ENCODE measurements at regions of chr6 and their contacts with region 1.

Region 1: DNA sequence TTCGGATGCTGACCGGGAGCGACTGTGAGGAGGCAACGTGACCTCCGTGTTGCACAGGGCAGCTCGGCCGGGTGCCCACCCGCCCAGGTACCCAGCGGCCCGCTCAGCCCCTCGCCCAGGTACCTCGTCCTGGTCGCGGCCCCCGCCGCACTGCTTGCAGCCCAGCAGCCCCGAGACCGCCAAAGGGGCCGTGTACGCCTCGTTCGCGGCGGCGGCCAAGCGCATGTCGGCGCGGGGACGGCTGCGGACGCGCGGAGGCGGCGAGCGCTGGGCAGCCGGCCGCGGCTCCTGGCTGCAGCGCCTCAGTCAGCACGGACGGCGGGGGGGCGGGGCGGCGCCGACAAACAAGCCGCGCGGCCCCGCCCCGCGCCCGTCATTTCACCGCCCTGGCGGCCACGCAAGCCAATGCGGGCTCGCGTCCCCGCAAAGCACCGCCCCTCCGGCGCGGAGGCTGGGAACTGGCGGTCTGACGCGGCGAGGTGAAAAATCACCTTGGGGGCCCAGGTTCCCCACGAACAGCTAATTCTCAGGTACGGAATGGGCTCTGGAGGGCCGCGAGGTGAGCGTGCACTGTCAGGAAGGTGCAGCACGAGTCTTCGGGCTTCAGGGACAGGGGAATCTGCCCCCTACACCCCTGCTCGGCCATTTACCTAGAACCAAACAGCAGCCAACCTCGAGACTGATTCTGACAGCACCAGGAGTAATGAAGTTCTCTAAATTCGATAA is 85.2 kb downstream of the SESN1 start:
- DNase-seq: peak; percentile 85 to 91 (median 90)
- ATAC-seq: peak; percentile 98
- H3K4me3 ChIP-seq: peak overlapping the region; percentile 84
- H3K4me3 Mint-ChIP-seq: peak overlapping the region; percentile 91 to 99 (median 96)
- H3K27ac ChIP-seq: peak overlapping the region; percentile 99
- H3K27ac Mint-ChIP-seq: peak overlapping the region; percentile 94 to 100 (median 98)
- H3K4me1 ChIP-seq: peaks cover 22 to 40% of the 10 kb centered on the region in 2 donors
- H3K4me1 Mint-ChIP-seq: peaks cover 26 to 81% (median 72%) of the 10 kb centered on the region in 7 donors
- H3K27me3 ChIP-seq: no peaks in the 10 kb centered on the region
- H3K27me3 Mint-ChIP-seq: peaks cover 0 to 3% (median 0%) of the 10 kb centered on the region in 5 donors

Region 2: GRCh38 chr6:107731422-107732319 is 1277.7 kb before region 1 on chr6:
- CTCF ChIA-PET with region 1: no interaction called
- POLR2A ChIA-PET with region 1: no interaction called
- intact Hi-C with region 1: loop called in 1 of 2 experiments (anchors 10 kb)
- DNase-seq: peak in 7 of 9 donors; percentile 45 to 64 (median 58)
- ATAC-seq: peak; percentile 53
- H3K4me3 ChIP-seq: peak overlapping the region; percentile 68
- H3K4me3 Mint-ChIP-seq: peak overlapping the region; percentile 85 to 99 (median 97)
- H3K27ac ChIP-seq: peak overlapping the region; percentile 77
- H3K27ac Mint-ChIP-seq: peak overlapping the region; percentile 77 to 98 (median 95)
- H3K4me1 ChIP-seq: peaks cover 55 to 65% of the 10 kb centered on the region in 2 donors
- H3K4me1 Mint-ChIP-seq: peaks cover 56 to 86% (median 76%) of the 10 kb centered on the region in 7 donors
- H3K27me3 ChIP-seq: no peaks in the 10 kb centered on the region
- H3K27me3 Mint-ChIP-seq: peaks cover 0 to 13% (median 0%) of the 10 kb centered on the region in 5 donors

Region 3: GRCh38 chr6:108541838-108542759 is 467.3 kb before region 1 on chr6:
- CTCF ChIA-PET with region 1: no interaction called
- POLR2A ChIA-PET with region 1: no interaction called
- intact Hi-C with region 1: loop called in 1 of 2 experiments (anchors 1 kb)
- DNase-seq: peak in 8 of 9 donors; percentile 41 to 77 (median 70)
- ATAC-seq: peak; percentile 84
- H3K4me3 ChIP-seq: no peak overlapping the region
- H3K4me3 Mint-ChIP-seq: peak overlapping the region in 7 of 10 donors; percentile 2 to 67 (median 31)
- H3K27ac ChIP-seq: no peak overlapping the region
- H3K27ac Mint-ChIP-seq: peak overlapping the region in 1 of 9 donors; percentile 33
- H3K4me1 ChIP-seq: peaks cover 8 to 11% of the 10 kb centered on the region in 2 donors
- H3K4me1 Mint-ChIP-seq: peaks cover 7 to 18% (median 8%) of the 10 kb centered on the region in 7 donors
- H3K27me3 ChIP-seq: no peaks in the 10 kb centered on the region
- H3K27me3 Mint-ChIP-seq: peaks cover 0 to 52% (median 6%) of the 10 kb centered on the region in 5 donors

Region 4: DNA sequence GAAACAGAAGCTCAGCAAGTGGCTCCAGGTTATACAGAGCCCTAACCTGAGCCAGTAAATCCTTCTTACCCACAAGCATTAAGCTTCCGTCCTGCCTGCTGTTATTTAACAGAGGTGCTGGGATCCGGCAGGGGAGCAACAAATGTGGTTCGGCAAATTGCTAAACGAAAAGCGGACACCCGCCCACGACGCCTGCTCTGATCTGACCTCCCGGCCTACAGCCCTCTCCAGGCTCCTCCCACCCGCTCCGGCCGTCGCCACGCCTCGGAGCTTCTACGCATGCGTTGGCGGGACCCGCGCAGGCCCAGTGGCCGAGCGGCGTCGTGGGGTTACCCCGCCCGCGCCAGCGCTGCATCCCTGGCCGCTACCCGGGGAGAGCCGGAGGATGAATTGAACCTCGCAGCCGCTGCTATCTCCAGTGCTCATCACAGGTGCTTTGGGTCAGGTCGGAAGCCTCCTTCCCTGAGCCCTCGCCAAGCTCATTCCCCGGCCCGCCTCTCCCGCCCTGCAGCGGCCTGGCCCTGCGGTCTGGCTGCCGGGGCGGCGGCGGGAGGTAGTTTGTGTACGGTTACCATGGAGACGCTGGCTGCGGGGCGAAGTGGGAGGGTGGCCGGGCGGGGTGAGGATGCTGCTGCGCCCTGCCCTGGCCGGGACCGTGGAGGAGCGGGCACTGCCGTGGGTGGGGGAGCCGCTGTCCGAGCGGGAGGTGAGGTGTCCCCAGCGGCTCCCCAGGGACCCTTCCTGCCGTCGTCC is 161.1 kb before region 1 on chr6 and contains the start of gene ARMC2:
- CTCF ChIA-PET with region 1: no interaction called
- POLR2A ChIA-PET with region 1: interaction called, 4 read pairs
- intact Hi-C with region 1: loop called in 1 of 2 experiments (anchors 1 kb)
- DNase-seq: peak; percentile 72 to 95 (median 79)
- ATAC-seq: peak; percentile 94
- H3K4me3 ChIP-seq: peak within 1 kb of the TSS; percentile 90
- H3K4me3 Mint-ChIP-seq: peak within 1 kb of the TSS; percentile 75 to 93 (median 88)
- H3K27ac ChIP-seq: peak within 1 kb of the TSS; percentile 69
- H3K27ac Mint-ChIP-seq: peak within 1 kb of the TSS; percentile 72 to 93 (median 85)
- H3K4me1 ChIP-seq: peaks cover 6 to 13% of the 10 kb centered on the region in 2 donors
- H3K4me1 Mint-ChIP-seq: peaks cover 11 to 39% (median 29%) of the 10 kb centered on the region in 7 donors
- H3K27me3 ChIP-seq: no peaks in the 10 kb centered on the region
- H3K27me3 Mint-ChIP-seq: peaks cover 0 to 36% (median 0%) of the 10 kb centered on the region in 5 donors
- total RNA-seq, gene ARMC2: 6.2 to 12.7 (median 7.9) TPM

Region 5: DNA sequence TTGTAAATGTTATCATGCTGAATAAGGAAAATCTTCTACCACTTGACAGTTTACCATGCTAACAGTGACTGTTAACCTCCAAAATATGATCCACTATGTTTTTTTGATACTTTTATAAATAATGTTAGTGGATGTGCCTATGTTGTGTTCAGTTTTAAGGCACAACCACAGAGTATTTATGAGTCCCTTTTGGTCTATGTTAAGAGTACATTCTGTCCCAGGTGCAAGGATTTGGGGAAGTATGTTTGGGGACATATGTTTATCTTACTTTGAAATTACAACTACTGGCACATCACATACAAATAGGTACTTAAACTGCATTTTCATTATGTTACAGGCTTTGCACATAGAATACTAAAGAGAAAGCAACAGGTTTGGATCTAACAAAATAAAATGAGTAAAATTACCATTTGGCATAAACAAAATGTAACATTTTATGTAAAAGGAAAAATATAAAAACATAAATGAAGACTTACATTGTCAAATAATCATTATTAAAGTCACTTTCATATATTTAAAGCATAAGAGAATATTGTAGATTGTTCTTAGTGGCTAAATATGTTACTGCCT is 14.0 kb after region 1 on chr6:
- CTCF ChIA-PET with region 1: interaction called, 3 read pairs
- POLR2A ChIA-PET with region 1: interaction called, 22 read pairs
- intact Hi-C with region 1: loop called in 1 of 2 experiments (anchors 1 kb)
- DNase-seq: no peak
- ATAC-seq: no peak
- H3K4me3 ChIP-seq: no peak overlapping the region
- H3K4me3 Mint-ChIP-seq: no peak overlapping the region
- H3K27ac ChIP-seq: no peak overlapping the region
- H3K27ac Mint-ChIP-seq: peak overlapping the region in 2 of 9 donors; percentile 2 to 9
- H3K4me1 ChIP-seq: peaks cover 16 to 47% of the 10 kb centered on the region in 2 donors
- H3K4me1 Mint-ChIP-seq: peaks cover 4 to 69% (median 52%) of the 10 kb centered on the region in 7 donors
- H3K27me3 ChIP-seq: no peaks in the 10 kb centered on the region
- H3K27me3 Mint-ChIP-seq: peaks cover 0 to 4% (median 0%) of the 10 kb centered on the region in 5 donors

Region 6: DNA sequence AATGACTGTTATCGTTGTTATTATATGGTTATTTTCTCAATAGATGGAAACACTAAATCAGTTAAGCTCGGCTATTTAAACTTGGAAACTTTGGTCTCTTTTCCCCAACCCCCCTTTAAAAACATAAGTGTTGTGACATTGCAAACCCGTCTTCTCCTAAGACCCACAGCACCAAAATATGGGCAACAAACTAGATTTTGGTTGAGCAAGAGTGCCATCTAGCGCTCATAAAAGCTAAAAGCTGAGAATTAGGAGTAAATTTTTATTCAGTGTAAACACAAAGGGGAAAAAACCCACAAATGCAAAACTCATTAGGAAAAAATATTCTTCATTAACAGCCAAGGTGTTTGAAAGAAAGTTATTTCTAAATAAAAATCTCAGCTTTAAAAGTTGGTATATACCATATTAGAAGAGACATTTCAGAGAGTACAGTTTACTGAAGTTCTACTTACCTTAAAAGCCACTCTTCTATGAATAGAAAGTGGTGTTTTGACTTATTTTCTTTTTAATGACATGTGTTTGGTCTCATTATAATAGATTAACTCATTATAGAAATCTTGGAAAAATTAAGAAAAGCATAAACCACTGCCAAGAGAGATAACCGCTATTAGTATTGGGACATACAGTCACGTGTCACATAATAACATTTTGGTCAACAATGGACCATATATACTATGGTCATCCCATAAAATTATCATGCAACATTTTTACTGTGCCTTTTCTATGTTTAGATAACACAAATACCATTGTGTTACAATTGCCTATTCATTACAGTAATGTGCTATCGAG is 64.1 kb after region 1 on chr6:
- CTCF ChIA-PET with region 1: interaction called, 57 read pairs
- POLR2A ChIA-PET with region 1: interaction called, 67 read pairs
- intact Hi-C with region 1: loop called in 1 of 2 experiments (anchors 1 kb)
- DNase-seq: peak in 7 of 9 donors; percentile 56 to 78 (median 72)
- ATAC-seq: peak; percentile 85
- H3K4me3 ChIP-seq: no peak overlapping the region
- H3K4me3 Mint-ChIP-seq: peak overlapping the region in 8 of 10 donors; percentile 1 to 64 (median 24)
- H3K27ac ChIP-seq: no peak overlapping the region
- H3K27ac Mint-ChIP-seq: peak overlapping the region in 4 of 9 donors; percentile 1 to 44 (median 4)
- H3K4me1 ChIP-seq: peaks cover 18 to 39% of the 10 kb centered on the region in 2 donors
- H3K4me1 Mint-ChIP-seq: peaks cover 15 to 37% (median 22%) of the 10 kb centered on the region in 7 donors
- H3K27me3 ChIP-seq: no peaks in the 10 kb centered on the region
- H3K27me3 Mint-ChIP-seq: peaks cover 0 to 12% (median 0%) of the 10 kb centered on the region in 5 donors

Region 7: DNA sequence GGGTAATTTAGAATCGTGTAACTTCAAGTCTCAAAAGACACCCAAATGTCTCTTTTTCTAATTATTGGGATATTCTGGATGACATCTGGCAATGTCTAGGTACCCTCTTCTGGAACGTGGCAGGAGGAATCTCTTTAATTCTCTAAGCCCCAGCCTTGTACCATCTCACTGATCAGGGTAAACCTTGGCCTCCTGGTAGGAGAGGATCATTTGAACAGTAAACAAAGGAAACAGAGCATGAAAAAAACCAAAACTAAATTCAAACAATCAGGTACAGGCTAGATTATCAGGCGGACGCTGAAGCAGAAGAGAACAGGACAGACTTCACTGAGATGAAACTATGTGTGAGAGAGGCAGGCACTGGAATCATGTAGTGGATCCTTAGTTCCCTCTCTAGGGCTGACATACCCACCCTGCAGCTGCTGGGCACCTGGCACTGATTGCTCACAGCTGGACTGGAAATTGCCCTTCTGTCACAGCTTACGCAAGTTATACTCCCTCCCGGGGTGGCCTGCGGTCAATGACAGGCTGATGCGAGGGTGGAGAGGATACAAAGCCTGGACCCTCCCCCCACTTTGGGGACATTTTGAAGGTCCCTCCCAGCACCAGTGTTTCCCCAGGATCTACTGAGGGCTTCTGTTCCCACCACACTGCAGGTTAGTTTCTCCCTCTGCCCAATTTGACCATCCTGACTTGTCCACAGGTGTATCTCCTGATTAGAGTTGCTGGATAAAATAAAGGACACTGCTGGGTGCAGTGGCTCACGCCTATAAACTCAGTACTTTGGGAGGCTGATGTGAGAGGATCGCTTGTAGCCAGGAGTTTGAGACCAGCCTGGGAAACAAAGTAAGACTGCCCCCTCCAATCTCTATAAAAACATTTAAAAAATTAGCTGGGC is 494.2 kb after region 1 on chr6:
- CTCF ChIA-PET with region 1: no interaction called
- POLR2A ChIA-PET with region 1: no interaction called
- intact Hi-C with region 1: no loop called
- DNase-seq: no peak
- ATAC-seq: no peak
- H3K4me3 ChIP-seq: no peak overlapping the region
- H3K4me3 Mint-ChIP-seq: no peak overlapping the region
- H3K27ac ChIP-seq: no peak overlapping the region
- H3K27ac Mint-ChIP-seq: no peak overlapping the region
- H3K4me1 ChIP-seq: no peaks in the 10 kb centered on the region
- H3K4me1 Mint-ChIP-seq: peaks cover 0 to 8% (median 5%) of the 10 kb centered on the region in 7 donors
- H3K27me3 ChIP-seq: no peaks in the 10 kb centered on the region
- H3K27me3 Mint-ChIP-seq: peaks cover 0 to 24% (median 0%) of the 10 kb centered on the region in 5 donors

Region 8: GRCh38 chr6:109610590-109610989 is 601.2 kb after region 1 on chr6:
- CTCF ChIA-PET with region 1: no interaction called
- POLR2A ChIA-PET with region 1: no interaction called
- intact Hi-C with region 1: no loop called
- DNase-seq: peak in 1 of 9 donors; percentile 6
- ATAC-seq: no peak
- H3K4me3 ChIP-seq: no peak overlapping the region
- H3K4me3 Mint-ChIP-seq: peak overlapping the region; percentile 15 to 83 (median 66)
- H3K27ac ChIP-seq: peak overlapping the region; percentile 23
- H3K27ac Mint-ChIP-seq: peak overlapping the region in 8 of 9 donors; percentile 26 to 92 (median 74)
- H3K4me1 ChIP-seq: peaks cover 0 to 12% of the 10 kb centered on the region in 2 donors
- H3K4me1 Mint-ChIP-seq: peaks cover 8 to 37% (median 22%) of the 10 kb centered on the region in 7 donors
- H3K27me3 ChIP-seq: no peaks in the 10 kb centered on the region
- H3K27me3 Mint-ChIP-seq: no peaks in the 10 kb centered on the region

Region 9: GRCh38 chr6:110664933-110665332 is 1655.5 kb after region 1 on chr6:
- CTCF ChIA-PET with region 1: no interaction called
- POLR2A ChIA-PET with region 1: no interaction called
- intact Hi-C with region 1: no loop called
- DNase-seq: no peak
- ATAC-seq: peak; percentile 77
- H3K4me3 ChIP-seq: no peak overlapping the region
- H3K4me3 Mint-ChIP-seq: no peak overlapping the region
- H3K27ac ChIP-seq: no peak overlapping the region
- H3K27ac Mint-ChIP-seq: no peak overlapping the region
- H3K4me1 ChIP-seq: no peaks in the 10 kb centered on the region
- H3K4me1 Mint-ChIP-seq: peaks cover 0 to 8% (median 0%) of the 10 kb centered on the region in 7 donors
- H3K27me3 ChIP-seq: no peaks in the 10 kb centered on the region
- H3K27me3 Mint-ChIP-seq: no peaks in the 10 kb centered on the region

Measured in naive thymus-derived CD4-positive, alpha-beta T cell (primary cell).